Pancreas (tissue), 10 donors: ENCODE measurements at regions of chr16 and their contacts with region 1.

Region 1: DNA sequence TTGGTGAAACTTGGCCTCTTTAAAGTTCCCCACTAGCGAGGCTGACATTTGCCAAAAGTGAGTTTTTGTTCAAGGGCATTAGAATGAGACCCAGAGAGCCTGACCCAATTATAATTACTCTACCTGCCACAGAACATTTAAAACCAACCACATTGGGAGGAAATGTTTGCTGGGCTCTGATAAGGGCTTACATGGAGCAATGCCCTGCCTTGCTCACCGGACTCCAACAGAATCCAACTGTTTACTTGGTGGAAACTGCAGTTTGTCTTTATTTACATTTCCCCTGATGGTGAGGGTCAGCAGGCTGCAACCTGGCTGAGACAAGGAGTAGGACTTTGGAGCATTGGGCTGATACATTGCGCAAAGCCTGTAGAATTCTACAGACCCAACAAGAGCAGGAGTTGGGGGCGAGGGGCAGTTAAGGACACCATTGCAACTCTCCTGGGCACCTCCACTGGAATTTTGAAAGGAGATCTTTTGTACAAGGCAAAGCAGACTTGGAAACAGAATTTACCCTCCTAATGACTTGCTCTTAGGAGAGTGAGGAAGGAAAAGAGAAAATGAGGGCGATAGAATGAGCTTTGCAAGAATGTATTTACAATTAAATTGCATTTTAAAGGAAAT is 368.6 kb downstream of the SHISA9 start:
- DNase-seq: no peak
- ATAC-seq: no peak
- H3K4me3 ChIP-seq: no peak overlapping the region
- H3K27ac ChIP-seq: no peak overlapping the region
- H3K4me1 ChIP-seq: no peaks in the 10 kb centered on the region
- H3K27me3 ChIP-seq: peaks cover 0 to 4% (median 0%) of the 10 kb centered on the region in 4 donors
- CTCF ChIP-seq: no peak

Region 2: GRCh38 chr16:12907670-12908233 is 362.3 kb before region 1 on chr16:
- intact Hi-C with region 1: no loop called
- DNase-seq: no peak
- ATAC-seq: no peak
- H3K4me3 ChIP-seq: no peak overlapping the region
- H3K27ac ChIP-seq: no peak overlapping the region
- H3K4me1 ChIP-seq: no peaks in the 10 kb centered on the region
- H3K27me3 ChIP-seq: peaks cover 0 to 11% (median 0%) of the 10 kb centered on the region in 4 donors
- CTCF ChIP-seq: no peak

Region 3: DNA sequence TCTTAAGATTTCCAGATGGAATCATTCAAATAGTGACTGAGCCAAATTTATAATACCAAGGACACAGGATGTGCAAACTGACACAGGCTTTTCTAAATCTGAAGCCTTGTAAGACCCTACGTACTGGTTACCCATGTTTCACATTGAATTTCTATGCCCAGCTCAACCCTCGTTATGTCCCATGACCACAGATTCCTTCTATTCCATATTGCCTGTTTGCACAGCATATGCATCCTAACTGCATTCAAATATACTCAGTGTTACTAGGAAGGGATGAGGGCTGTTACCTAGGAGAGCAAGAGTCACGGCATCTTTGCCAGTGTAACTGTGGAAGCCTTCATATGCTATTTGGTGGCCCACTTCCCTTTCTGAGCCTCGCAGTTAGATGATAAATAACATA is 63.4 kb before region 1 on chr16:
- intact Hi-C with region 1: loop called in 1 of 3 experiments (anchors 10 kb)
- DNase-seq: no peak
- ATAC-seq: no peak
- H3K4me3 ChIP-seq: no peak overlapping the region
- H3K27ac ChIP-seq: no peak overlapping the region
- H3K4me1 ChIP-seq: no peaks in the 10 kb centered on the region
- H3K27me3 ChIP-seq: no peaks in the 10 kb centered on the region
- CTCF ChIP-seq: no peak